ENCODE measurements at regions of chr19 and their contacts with region 1.

Region 1: DNA sequence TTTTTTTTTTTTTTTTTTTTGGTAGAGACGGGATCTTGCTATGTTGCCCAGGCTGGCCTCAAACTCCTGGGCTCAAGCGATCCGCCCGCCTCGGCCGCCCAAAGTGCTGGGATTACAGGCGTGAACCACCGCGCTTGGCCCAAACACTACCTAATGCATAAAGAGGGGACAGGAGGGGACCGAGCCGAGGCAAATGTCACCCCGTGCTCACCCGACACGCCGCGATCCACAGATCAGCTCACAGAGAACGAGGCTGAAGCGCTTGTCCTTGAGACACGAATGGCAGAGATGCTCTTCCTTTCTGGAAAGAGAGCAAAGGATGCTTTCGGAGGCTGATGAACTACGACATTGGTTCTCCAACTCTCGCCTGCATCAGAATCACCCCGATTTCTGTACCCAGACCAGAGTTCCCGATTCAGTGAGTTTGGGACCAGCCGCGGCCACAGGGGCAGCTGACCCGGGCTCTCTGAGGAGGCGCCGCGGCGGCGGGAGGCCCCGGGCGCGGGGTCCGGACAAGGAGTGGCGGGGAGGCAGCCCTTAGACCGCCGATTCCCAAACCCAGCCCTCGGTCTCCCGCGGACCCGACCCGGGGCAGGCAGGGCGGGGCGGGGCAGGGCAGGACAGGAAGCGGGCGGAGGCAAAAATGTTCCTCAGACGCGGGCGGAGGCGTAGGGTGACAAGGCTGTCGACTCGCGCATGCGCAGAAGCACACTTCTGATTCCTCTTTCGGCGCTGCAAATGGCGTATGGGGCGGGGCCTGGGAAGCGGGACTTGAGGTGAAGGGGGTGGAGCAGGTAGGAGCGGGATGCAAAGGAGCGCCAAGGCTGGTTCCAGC is at the start of gene ZNF699:
- DNase-seq: peak; percentile 96 to 99 (median 98)
- ATAC-seq: peak; percentile 90
- H3K4me3 ChIP-seq: peak within 1 kb of the TSS; percentile 86 to 100
- H3K4me3 Mint-ChIP-seq: peak within 1 kb of the TSS; percentile 94
- H3K27ac ChIP-seq: peak within 1 kb of the TSS; percentile 86
- H3K27ac Mint-ChIP-seq: peak within 1 kb of the TSS; percentile 96
- H3K4me1 ChIP-seq: peaks cover 13% of the 10 kb centered on the region
- H3K4me1 Mint-ChIP-seq: peaks cover 34% of the 10 kb centered on the region
- H3K27me3 ChIP-seq: no peaks in the 10 kb centered on the region
- H3K27me3 Mint-ChIP-seq: no peaks in the 10 kb centered on the region
- CTCF ChIP-seq: no peak
- total RNA-seq, gene ZNF699: 15.1 to 16.0 TPM

Region 2: DNA sequence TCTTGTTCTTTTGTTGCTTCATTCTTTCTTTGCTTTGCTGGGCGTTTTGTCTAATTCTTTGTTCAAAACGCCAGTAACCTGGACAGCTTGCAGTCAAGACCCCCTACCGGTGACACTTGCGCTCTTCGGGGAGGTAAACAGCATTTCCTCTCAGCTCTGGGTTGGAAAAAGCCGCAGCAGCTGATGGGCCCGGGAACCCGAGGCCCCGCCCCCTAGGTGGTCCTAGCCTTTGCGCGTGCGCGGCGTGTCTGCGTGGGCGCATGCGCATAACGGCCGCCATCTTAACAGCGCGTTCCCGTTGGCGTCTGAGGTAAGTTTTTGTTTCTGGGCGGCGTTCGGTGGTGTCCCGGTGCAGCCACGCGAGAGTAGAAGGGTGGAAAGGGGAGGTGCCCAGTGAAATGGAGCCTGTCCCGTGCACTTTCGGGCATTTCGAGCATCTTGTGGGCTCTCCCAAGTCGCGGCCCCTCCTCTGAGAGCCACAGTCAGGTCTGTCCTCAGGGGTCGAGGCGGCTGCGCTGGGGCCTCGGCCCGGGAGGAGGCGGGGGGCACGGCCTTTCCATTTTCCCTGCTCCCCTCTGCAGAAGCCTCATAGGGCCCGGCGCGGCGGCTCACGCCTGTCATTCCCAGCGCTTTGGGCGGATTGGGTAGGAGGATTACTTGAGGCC is 14.7 kb after region 1 on chr19 and contains the start of gene ZNF559:
- CTCF ChIA-PET with region 1: interaction called, 15 read pairs
- POLR2A ChIA-PET with region 1: interaction called, 17 read pairs
- intact Hi-C with region 1: loop called (anchors 1 kb)
- DNase-seq: peak; percentile 95 to 99 (median 98)
- ATAC-seq: peak; percentile 95
- H3K4me3 ChIP-seq: peak within 1 kb of the TSS; percentile 75 to 78
- H3K4me3 Mint-ChIP-seq: peak within 1 kb of the TSS; percentile 88
- H3K27ac ChIP-seq: peak within 1 kb of the TSS; percentile 62 to 83
- H3K27ac Mint-ChIP-seq: peak within 1 kb of the TSS; percentile 87
- H3K4me1 ChIP-seq: peaks cover 12% of the 10 kb centered on the region
- H3K4me1 Mint-ChIP-seq: peaks cover 38% of the 10 kb centered on the region
- H3K27me3 ChIP-seq: no peaks in the 10 kb centered on the region
- H3K27me3 Mint-ChIP-seq: no peaks in the 10 kb centered on the region
- CTCF ChIP-seq: peak; percentile 39
- total RNA-seq, gene ZNF559: 4.0 to 4.5 TPM

Region 3: GRCh38 chr19:9406798-9407352 is 97.5 kb after region 1 on chr19:
- CTCF ChIA-PET with region 1: no interaction called
- POLR2A ChIA-PET with region 1: interaction called, 3 read pairs
- intact Hi-C with region 1: loop called in 1 of 2 experiments (anchors 10 kb)
- DNase-seq: peak in 8 of 9 experiments; percentile 12 to 58 (median 52)
- ATAC-seq: peak; percentile 69
- H3K4me3 ChIP-seq: peak overlapping the region; percentile 47 to 76
- H3K4me3 Mint-ChIP-seq: peak overlapping the region; percentile 79
- H3K27ac ChIP-seq: no peak overlapping the region
- H3K27ac Mint-ChIP-seq: peak overlapping the region; percentile 41
- H3K4me1 ChIP-seq: peaks cover 11% of the 10 kb centered on the region
- H3K4me1 Mint-ChIP-seq: peaks cover 17% of the 10 kb centered on the region
- H3K27me3 ChIP-seq: no peaks in the 10 kb centered on the region
- H3K27me3 Mint-ChIP-seq: no peaks in the 10 kb centered on the region
- CTCF ChIP-seq: no peak

Region 4: DNA sequence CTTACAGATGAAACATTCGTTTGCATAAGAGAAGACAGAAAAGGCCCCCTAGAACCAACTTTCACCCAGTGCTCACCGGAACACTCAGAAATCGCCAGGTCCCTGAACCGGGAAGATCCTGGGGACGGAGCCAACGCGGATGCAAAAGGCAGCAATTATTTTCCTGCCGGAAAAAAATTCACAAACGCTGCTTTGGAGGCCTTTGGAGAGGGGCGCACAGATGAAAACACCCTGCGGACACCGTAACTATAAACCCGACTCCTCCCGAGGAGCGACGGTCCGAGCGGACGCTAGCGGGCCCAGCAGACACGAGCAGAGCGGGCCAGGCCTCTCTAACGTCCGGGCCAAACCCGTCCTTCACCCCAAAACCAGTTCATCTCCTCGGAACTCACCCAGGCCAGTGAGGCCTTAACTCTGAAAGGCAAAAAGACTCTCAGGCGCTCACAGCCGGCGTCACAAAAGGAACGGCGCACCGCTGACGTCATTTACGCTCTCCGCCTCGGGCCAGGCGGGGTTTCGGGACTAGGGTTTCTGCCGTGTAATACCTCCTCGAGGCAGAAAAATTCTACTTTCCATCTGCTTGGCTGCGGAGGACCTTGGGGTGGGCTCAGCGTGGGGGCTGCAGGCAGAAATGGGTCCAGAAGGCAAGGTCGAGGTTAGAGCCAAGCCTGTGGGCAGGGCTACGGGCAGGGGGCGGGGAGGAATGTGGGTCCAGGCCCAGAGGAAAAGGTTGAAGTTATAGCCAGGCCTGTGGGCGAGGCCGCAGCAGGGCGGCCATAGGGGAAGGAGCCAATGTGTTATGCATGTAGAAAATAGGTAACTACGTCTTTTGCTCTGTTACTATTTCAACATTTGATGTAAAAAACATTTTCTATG is 229.1 kb after region 1 on chr19 and contains the start of gene ZNF426:
- CTCF ChIA-PET with region 1: no interaction called
- POLR2A ChIA-PET with region 1: no interaction called
- intact Hi-C with region 1: loop called in 1 of 2 experiments (anchors 1 kb)
- DNase-seq: peak; percentile 77 to 92 (median 86)
- ATAC-seq: peak; percentile 94
- H3K4me3 ChIP-seq: peak within 1 kb of the TSS; percentile 89 to 93
- H3K4me3 Mint-ChIP-seq: peak within 1 kb of the TSS; percentile 99
- H3K27ac ChIP-seq: peak within 1 kb of the TSS; percentile 91
- H3K27ac Mint-ChIP-seq: peak within 1 kb of the TSS; percentile 100
- H3K4me1 ChIP-seq: peaks cover 17% of the 10 kb centered on the region
- H3K4me1 Mint-ChIP-seq: peaks cover 35% of the 10 kb centered on the region
- H3K27me3 ChIP-seq: no peaks in the 10 kb centered on the region
- H3K27me3 Mint-ChIP-seq: no peaks in the 10 kb centered on the region
- CTCF ChIP-seq: no peak
- total RNA-seq, gene ZNF426: 16.6 to 17.9 TPM

Region 5: DNA sequence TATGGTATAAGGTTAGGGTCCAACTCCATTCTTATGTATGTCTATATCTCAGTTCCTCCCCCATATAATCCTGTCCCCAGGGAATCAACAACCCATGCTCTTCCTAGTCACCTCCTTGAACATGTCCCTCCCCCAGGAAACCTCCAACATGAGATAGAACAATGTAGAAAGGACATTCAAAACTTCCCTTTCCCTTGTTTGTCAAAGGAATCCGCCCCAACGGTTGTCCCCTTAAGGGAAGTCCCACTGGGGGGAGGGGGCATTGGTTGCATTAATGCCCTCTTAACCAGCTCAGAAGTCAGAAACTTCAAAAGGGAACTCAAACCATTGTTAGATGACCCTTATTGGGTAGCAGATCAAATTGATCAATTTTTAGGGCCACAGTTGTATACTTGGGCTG is 318.5 kb after region 1 on chr19:
- CTCF ChIA-PET with region 1: no interaction called
- POLR2A ChIA-PET with region 1: no interaction called
- intact Hi-C with region 1: loop called in 1 of 2 experiments (anchors 5 kb)
- DNase-seq: no peak
- ATAC-seq: no peak
- H3K4me3 ChIP-seq: no peak overlapping the region
- H3K4me3 Mint-ChIP-seq: no peak overlapping the region
- H3K27ac ChIP-seq: no peak overlapping the region
- H3K27ac Mint-ChIP-seq: no peak overlapping the region
- H3K4me1 ChIP-seq: no peaks in the 10 kb centered on the region
- H3K4me1 Mint-ChIP-seq: peaks cover 5% of the 10 kb centered on the region
- H3K27me3 ChIP-seq: no peaks in the 10 kb centered on the region
- H3K27me3 Mint-ChIP-seq: no peaks in the 10 kb centered on the region
- CTCF ChIP-seq: no peak

Region 6: DNA sequence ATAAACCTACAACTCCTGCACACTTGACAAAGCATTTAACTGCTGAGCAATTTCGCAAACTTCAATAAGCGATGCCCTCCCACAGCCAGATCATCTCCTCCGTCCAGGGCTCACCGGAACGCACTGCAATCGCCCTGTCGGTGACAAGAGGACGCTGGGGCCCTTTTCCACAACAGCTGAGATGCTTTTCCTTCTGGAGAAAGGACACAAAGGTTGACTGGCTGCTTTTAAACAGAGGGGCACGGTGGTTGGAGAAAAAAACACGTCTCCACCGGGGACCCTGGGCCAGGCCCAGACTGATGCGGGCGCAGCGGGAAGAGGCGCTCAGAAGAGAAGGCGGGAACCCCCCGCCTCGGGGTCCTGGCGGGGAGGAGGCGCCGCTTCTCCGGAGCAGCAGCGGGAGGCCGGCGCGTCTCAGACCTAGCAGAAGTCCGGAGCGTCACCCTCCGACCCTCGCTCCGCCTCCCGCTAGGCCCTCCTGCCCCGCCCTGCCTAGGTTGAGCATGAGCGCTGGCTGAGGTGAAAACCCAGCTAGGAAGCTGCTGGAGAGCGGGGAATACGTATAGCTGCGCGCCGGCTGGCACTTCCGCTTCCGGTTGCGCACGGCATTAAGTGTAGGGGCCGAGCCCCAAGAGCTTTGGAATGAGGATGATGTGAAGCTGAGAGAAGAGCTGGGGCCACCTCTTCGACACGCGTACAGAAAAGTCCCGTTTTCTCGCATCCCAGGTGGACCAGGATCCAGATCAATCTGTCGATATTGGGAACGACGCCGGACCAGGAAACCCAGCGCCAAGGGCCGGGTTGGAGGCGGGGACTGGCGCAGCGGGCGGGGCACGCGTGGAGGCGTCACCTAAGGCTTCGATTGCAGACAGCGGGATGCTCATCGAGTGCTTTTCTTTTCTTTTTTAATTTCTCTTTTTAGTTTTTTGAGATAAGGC is 459.1 kb after region 1 on chr19 and contains the start of gene ZNF846:
- CTCF ChIA-PET with region 1: no interaction called
- POLR2A ChIA-PET with region 1: no interaction called
- intact Hi-C with region 1: loop called in 1 of 2 experiments (anchors 1 kb)
- DNase-seq: peak; percentile 83 to 96 (median 93)
- ATAC-seq: peak; percentile 95
- H3K4me3 ChIP-seq: peak within 1 kb of the TSS; percentile 94 to 96
- H3K4me3 Mint-ChIP-seq: peak within 1 kb of the TSS; percentile 97
- H3K27ac ChIP-seq: peak within 1 kb of the TSS; percentile 87 to 99
- H3K27ac Mint-ChIP-seq: peak within 1 kb of the TSS; percentile 99
- H3K4me1 ChIP-seq: peaks cover 8% of the 10 kb centered on the region
- H3K4me1 Mint-ChIP-seq: peaks cover 16% of the 10 kb centered on the region
- H3K27me3 ChIP-seq: no peaks in the 10 kb centered on the region
- H3K27me3 Mint-ChIP-seq: no peaks in the 10 kb centered on the region
- CTCF ChIP-seq: no peak
- total RNA-seq, gene ZNF846: 6.4 to 8.2 TPM

Region 7: DNA sequence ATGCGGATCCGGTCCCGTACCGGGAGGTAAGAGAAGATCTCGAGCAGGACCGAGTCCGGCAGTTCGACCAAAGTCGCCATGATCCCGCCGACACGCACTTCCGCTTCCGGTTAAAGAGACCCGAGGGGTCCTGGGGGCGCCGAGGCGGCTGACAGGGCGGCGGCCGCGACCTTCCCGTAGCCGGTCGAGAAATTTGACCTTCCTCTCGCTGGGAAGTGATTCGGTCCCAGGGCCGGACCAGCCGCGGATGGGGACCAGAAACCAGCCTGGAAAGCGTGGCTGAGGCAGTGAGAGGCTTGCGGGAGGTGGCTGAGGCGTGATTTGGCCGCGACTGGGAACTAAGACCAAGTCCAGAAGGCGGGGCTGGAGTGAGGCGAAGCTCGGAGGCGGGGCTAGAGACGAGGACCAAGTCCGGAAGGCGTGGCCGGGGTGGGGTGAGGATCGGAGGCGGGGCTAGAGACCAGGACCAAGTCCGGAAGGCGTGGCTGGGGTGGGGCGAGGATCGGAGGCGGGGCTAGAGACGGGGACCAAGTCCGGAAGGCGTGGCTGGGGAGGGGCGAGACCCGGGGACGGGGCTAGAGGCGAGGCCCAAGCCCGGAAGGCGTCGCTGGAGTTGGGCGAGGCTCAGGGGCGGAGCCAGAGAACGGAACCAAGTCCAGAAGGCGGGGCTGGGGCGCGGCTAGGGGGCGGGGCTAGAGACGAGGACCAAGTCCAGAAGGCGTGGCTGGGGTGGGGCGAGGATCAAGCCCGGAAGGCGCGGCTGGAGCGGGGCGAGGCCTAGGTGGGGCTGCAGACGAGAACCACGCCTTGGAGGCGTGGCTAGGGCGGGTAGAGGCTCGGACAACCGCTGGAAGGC is 509.6 kb after region 1 on chr19 and contains the start of gene FBXL12:
- CTCF ChIA-PET with region 1: no interaction called
- POLR2A ChIA-PET with region 1: no interaction called
- intact Hi-C with region 1: no loop called
- DNase-seq: peak; percentile 100
- ATAC-seq: peak; percentile 89
- H3K4me3 ChIP-seq: peak within 1 kb of the TSS; percentile 97 to 100
- H3K4me3 Mint-ChIP-seq: peak within 1 kb of the TSS; percentile 88
- H3K27ac ChIP-seq: peak within 1 kb of the TSS; percentile 98 to 99
- H3K27ac Mint-ChIP-seq: peak within 1 kb of the TSS; percentile 93
- H3K4me1 ChIP-seq: peaks cover 18% of the 10 kb centered on the region
- H3K4me1 Mint-ChIP-seq: peaks cover 38% of the 10 kb centered on the region
- H3K27me3 ChIP-seq: no peaks in the 10 kb centered on the region
- H3K27me3 Mint-ChIP-seq: no peaks in the 10 kb centered on the region
- CTCF ChIP-seq: no peak
- total RNA-seq, gene FBXL12: 38.9 to 41.3 TPM

Measured in CD8-positive, alpha-beta T cell (primary cell).